Left cardiac atrium (tissue), 4 donors: ENCODE measurements at regions of chr16 and their contacts with region 1.

Region 1: DNA sequence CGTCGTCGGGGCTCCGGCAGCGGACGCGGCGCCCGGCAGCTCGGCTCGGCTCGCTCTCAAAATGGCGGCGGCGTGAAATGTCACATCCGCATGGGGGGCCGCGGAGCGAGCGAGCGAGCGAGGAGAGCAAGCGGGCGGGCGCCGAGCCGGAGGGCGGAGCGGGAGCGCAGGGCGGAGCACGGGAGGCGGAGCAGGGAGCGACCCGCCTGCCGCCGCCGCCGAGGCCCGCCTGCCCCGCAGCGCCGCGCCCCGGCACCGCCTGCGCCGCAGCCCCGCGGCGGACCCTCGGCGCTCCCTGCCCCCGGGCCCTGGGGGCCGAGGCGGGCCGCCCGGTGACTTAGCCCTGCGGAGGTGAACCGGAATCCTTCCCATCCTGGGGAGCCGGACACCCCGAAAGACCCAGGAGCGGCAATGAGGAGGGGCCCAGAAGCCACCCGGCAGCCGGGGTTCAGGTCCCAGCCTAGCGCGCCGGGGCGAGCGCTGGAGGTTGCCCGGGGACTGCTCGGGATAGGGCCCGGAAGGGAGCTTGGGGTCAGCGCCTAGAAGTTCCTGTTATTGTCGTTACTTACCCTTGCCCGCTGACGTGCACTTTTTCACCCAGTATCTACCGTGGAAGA is at the start of gene USP7:
- DNase-seq: peak; percentile 95
- ATAC-seq: peak; percentile 94 to 98
- total RNA-seq, gene USP7: 56.0 to 69.1 TPM

Region 2: DNA sequence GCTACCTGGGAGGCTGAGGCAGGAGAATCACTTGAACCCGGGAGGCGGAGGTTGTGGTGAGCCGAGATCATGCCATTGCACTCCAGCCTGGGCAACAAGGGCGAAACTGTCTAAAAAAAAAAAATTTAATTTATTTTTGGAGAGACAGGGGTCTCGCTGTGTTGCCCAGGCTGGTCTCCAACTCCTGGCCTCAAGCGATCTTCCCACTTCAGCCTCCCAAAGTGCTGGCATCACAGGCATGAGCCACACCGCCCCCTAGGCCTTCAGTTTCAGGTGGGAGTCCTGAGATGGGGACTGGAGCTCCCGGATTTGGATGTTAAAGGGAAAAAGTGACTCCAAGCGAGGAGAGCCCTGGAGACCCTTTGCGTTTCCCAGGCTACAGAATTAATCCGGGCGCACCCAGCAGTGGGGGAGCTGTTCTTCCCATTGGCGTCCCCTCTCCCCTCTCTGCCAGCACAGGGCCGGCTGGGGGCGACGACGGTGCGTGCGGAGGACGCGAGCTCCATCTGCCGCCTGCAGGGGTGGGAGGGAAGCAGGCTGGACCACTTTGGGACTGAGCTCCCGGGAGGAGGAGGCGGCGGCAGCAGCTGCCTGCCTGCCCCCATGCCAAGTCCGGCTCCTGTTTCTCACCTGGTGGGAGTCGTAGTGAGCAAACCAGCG is 49.0 kb after region 1 on chr16:
- intact Hi-C with region 1: no loop called
- DNase-seq: no peak
- ATAC-seq: peak in 1 of 2 donors; percentile 47

Region 3: GRCh38 chr16:9090960-9091866 is 127.3 kb after region 1 on chr16 and contains the start of gene HAPSTR1:
- intact Hi-C with region 1: loop called in 1 of 2 experiments (anchors 5 kb)
- DNase-seq: peak; percentile 100
- ATAC-seq: peak; percentile 93 to 94
- total RNA-seq, gene HAPSTR1: 35.6 to 50.5 TPM

Region 4: DNA sequence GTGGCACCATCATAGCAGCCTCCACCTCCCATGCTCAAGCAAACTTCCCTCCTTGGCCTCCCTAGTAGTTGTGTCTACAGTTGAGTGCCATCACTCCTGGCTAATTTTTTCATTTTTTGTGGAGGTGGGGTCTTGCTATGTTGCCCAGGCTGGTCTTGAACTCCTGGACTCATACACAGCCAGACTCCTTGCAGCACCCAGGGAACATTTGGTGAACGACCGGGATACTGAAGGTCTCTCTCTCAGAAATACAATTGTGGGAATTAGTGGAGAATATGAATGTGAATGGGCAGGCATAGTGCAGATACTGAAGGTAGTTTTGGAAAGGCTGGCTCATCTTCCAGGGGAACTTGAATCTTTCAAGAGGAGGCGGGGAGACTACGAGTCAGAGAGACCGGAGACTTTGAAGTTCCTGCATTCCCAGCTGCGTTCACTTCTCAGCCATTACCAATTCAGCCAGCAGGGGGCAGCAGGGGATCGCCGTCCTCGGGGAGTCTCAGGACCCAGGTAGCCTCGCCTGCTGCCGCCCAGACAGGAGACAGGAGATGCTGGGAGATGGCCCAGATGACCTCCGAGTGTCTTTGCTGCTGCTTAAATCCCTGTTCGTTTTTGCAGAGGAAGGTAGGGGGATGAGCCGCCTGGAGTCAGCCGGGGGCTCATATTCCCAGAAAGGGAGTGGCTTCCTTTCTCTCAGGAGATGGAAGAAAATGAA is 196.1 kb after region 1 on chr16:
- intact Hi-C with region 1: no loop called
- DNase-seq: peak; percentile 30
- ATAC-seq: peak; percentile 38 to 81